HCT116 (cell line): ENCODE measurements at regions of chr7 and their contacts with region 1.

Region 1: DNA sequence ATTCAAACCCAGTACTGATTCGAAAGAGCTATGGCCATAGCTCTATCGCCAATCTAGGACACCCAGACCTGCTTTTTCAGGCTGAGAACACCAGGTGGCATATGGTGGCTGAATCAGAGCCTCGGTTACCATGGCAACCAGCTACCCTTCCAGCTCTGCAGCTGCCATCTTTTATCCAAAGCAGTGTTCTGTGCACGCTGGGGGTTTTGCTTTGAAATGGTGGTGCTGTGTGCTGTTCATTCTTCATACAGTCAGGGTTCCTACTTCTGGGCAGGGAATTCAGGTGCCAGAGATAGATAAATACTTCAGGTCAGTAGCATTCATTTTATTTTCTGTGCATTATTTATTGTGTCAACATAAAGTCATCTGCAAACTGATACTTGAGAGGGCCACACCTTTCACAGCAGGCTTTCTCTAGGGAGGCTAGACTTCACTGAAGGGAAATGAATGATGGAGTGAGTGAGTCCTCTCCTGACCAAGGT is 85.4 kb downstream of the AKR1D1 start:
- DNase-seq: peak; percentile 85
- ATAC-seq: peak; percentile 98
- H3K4me3 ChIP-seq: 0 out of 4 replicates have a peak overlapping the region, but pooled peaks of 1 of the 2 experiments have one; percentile 15
- H3K27ac ChIP-seq: no peak overlapping the region
- H3K4me1 ChIP-seq: peaks cover 0 to 8% of the 10 kb centered on the region in 2 experiments; a peak in 2 of 4 replicates
- H3K27me3 ChIP-seq: no peaks in the 10 kb centered on the region
- CTCF ChIP-seq: peak; percentile 66 to 78 (median 74)
- POLR2A ChIP-seq: no peak
- RAD21 ChIP-seq: peak; percentile 86

Region 2: DNA sequence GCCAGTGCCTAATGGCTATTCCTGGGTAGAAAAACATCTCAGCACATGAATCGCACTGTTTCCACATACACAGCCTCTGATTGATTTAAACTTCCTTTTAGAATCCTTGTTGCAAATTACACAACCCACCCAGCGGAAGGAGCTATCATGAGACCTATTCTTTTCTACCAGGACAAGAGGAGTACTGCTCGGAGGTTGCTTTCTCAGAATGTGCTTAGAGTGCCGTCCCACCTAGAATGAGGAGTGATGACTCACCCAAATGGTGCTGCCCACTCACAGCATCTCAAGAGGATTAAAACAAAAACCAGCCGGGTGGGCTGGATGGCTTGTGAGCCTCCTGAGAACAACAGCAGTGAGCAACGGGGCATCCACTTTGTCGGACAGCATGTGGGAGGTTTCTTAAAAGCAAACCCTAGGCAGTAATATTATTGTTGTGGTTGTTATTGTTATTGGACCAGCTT is 443.8 kb before region 1 on chr7:
- CTCF ChIA-PET with region 1: no interaction called
- POLR2A ChIA-PET with region 1: no interaction called
- RAD21 ChIA-PET with region 1: no interaction called
- intact Hi-C with region 1: no loop called
- DNase-seq: no peak
- ATAC-seq: no peak
- H3K4me3 ChIP-seq: no peak overlapping the region
- H3K27ac ChIP-seq: no peak overlapping the region
- H3K4me1 ChIP-seq: no peaks in the 10 kb centered on the region
- H3K27me3 ChIP-seq: peaks cover 20% of the 10 kb centered on the region; the same call in 1 of the 2 replicates
- CTCF ChIP-seq: no peak
- POLR2A ChIP-seq: no peak
- RAD21 ChIP-seq: no peak

Region 3: DNA sequence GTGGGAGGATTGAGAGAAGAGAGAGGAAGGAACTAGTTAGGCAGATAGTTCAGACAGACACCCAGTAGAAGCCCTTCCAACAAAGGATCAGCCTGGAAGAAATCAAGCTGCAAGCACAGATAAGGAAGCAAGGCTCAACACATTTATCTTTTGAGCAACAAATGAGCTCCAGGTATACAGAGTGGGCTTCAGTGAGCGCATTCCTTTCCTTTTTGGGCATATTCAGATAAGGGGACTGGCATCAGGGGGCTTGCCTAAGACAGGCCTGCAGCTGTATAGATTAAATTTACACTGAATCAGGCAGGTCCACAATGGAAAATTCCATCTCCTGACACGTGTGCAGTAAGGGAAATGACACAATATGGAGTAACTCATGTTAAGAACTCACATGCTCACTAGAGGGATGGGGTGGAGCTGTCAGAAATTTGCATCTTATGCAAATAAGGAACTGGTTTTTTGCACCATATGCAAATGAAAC is 61.8 kb after region 1 on chr7:
- CTCF ChIA-PET with region 1: no interaction called
- POLR2A ChIA-PET with region 1: no interaction called
- RAD21 ChIA-PET with region 1: no interaction called
- intact Hi-C with region 1: no loop called
- DNase-seq: no peak
- ATAC-seq: no peak
- H3K4me3 ChIP-seq: no peak overlapping the region
- H3K27ac ChIP-seq: no peak overlapping the region
- H3K4me1 ChIP-seq: no peaks in the 10 kb centered on the region
- H3K27me3 ChIP-seq: no peaks in the 10 kb centered on the region
- CTCF ChIP-seq: no peak
- POLR2A ChIP-seq: no peak
- RAD21 ChIP-seq: no peak

Region 4: GRCh38 chr7:138865843-138866242 is 704.2 kb after region 1 on chr7:
- CTCF ChIA-PET with region 1: no interaction called
- POLR2A ChIA-PET with region 1: no interaction called
- RAD21 ChIA-PET with region 1: no interaction called
- intact Hi-C with region 1: loop called (anchors 1 kb)
- DNase-seq: no peak
- ATAC-seq: peak; percentile 64
- H3K4me3 ChIP-seq: no peak overlapping the region
- H3K27ac ChIP-seq: no peak overlapping the region
- H3K4me1 ChIP-seq: peaks cover 0 to 8% of the 10 kb centered on the region in 2 experiments; a peak in 2 of 4 replicates
- H3K27me3 ChIP-seq: no peaks in the 10 kb centered on the region
- CTCF ChIP-seq: peak in 2 of 3 experiments; percentile 48 to 55; a peak in 4 of 6 replicates
- POLR2A ChIP-seq: no peak
- RAD21 ChIP-seq: peak; percentile 68